Sigmoid colon (tissue), 7 donors: ENCODE measurements at regions of chr1 and their contacts with region 1.

Region 1: DNA sequence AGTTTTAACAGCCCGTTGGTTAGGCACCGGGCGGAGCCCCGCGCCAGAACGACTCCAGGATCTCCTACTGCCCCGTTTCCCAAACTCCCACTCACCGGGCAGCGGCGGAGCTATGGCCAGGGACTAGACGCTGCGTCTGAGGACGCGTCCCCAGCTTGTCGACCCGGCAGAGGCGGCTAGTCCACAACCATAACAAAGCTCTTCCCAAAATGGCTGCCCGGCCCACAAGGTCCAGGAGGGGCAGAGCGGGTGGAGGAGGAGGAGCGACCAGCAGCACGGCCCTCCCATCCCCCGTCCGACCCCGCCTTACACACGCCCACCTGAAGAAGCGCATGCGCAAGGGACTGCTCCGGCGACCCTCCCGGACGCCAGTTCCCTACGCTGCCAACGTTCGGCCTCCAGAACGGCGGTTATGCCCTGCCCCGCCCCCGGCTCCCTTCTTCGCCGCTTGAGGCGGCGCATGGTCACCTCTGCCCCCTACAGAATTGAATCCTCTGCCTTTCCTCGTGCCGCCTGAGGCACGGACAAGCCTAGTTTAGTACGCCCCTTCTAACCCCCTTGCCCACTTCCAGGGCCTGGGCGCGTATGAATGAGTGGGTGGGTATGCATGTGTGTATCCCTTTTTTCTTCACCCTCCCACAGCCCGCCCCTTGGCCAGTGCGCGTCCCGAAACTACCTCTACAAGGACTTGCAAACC is at the start of gene GPBP1L1:
- DNase-seq: peak; percentile 99
- H3K4me3 ChIP-seq: peak within 1 kb of the TSS; percentile 63 to 96 (median 81)
- H3K27ac ChIP-seq: peak within 1 kb of the TSS; percentile 97 to 99 (median 98)
- H3K4me1 ChIP-seq: peaks cover 0 to 61% (median 49%) of the 10 kb centered on the region in 4 donors
- H3K27me3 ChIP-seq: no peaks in the 10 kb centered on the region
- CTCF ChIP-seq: no peak
- EP300 ChIP-seq: peak in 1 of 4 donors; percentile 2
- POLR2A ChIP-seq: peak; percentile 69 to 80
- total RNA-seq, gene GPBP1L1: 94.5 to 142 (median 130) TPM

Region 2: DNA sequence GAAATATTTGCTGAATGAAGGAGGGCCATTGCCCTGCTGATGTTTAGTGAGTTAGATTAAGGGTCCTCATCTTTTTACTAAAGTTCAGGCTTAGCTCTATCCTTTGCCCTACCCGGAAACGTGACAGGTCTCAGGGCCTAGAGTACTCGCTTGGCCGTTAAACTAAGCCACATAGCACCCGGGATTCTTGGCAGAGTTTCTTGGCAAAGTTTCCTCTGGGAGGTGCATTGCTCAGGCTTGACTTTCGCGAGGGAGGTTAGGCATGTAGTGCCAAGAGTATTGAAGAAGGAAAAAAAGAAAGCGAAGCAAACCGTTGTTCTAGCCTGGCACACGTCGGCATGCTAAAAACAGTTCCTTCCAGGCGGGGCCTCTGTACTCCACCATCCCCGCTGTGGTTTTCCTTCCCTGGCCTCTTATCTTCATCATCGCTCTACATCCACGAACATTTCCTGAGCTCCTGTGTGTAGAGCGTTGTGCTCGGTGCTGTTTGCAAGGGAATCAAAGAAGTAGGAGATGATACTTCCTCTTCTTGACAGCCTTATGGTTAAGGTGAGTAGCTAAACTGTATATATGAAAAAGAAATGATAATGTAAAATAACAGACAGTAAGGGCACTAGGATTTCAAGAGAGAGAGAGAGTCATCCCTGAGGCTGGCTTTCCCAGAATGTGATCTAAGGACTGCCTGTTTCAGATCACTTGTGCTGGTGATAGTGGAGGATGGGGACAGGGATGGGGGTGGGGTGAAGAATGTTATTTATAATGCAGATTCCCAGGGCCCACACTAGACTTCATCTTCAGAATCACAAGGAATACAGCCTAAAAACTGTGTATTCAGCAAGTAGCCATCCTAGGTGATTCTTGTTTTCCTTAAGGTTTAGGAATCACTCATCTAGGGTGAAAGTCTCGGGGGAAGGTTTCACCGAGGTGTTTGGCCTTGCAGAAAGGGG is 1262.6 kb before region 1 on chr1:
- intact Hi-C with region 1: no loop called
- DNase-seq: peak; percentile 78
- H3K4me3 ChIP-seq: peak overlapping the region in 1 of 4 donors; percentile 21
- H3K27ac ChIP-seq: peak overlapping the region in 3 of 4 donors; percentile 38 to 60 (median 54)
- H3K4me1 ChIP-seq: peaks cover 0 to 16% (median 11%) of the 10 kb centered on the region in 4 donors
- H3K27me3 ChIP-seq: peaks cover 0 to 67% (median 26%) of the 10 kb centered on the region in 3 donors
- CTCF ChIP-seq: no peak
- EP300 ChIP-seq: no peak
- POLR2A ChIP-seq: no peak

Region 3: GRCh38 chr1:45359882-45360513 is 326.5 kb before region 1 on chr1:
- intact Hi-C with region 1: loop called (anchors 5 kb)
- DNase-seq: peak; percentile 81
- H3K4me3 ChIP-seq: no peak overlapping the region
- H3K27ac ChIP-seq: peak overlapping the region; percentile 67 to 76 (median 72)
- H3K4me1 ChIP-seq: peaks cover 0 to 24% (median 14%) of the 10 kb centered on the region in 4 donors
- H3K27me3 ChIP-seq: no peaks in the 10 kb centered on the region
- CTCF ChIP-seq: peak; percentile 30 to 71 (median 54)
- EP300 ChIP-seq: no peak
- POLR2A ChIP-seq: no peak

Region 4: DNA sequence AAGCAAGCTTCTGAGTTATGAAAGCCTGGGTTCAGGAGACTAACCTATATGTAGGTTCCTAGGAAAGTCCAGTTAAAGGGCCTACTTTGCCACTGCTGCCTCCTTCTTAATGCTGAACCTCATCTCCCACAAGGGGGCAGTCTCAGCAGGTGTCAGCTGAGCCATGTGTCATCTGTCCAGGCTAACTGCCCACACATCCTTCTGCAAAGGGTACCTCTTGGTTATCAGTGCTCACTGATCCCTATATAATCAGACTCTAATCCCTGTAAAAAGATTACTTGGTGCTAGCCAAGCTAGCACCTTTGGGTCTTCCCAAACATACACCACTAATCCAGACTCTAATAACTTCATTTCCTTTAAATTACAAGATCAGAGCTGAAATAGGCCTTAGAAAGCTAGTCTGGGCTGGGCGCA is 173.8 kb before region 1 on chr1:
- intact Hi-C with region 1: loop called (anchors 10 kb)
- DNase-seq: peak; percentile 67
- H3K4me3 ChIP-seq: no peak overlapping the region
- H3K27ac ChIP-seq: no peak overlapping the region
- H3K4me1 ChIP-seq: peaks cover 0 to 24% (median 16%) of the 10 kb centered on the region in 4 donors
- H3K27me3 ChIP-seq: no peaks in the 10 kb centered on the region
- CTCF ChIP-seq: peak; percentile 6 to 66 (median 52)
- EP300 ChIP-seq: no peak
- POLR2A ChIP-seq: no peak

Region 5: GRCh38 chr1:45583264-45583665 is 103.2 kb before region 1 on chr1:
- intact Hi-C with region 1: loop called (anchors 2 kb)
- DNase-seq: peak; percentile 99
- H3K4me3 ChIP-seq: peak overlapping the region; percentile 79 to 98 (median 82)
- H3K27ac ChIP-seq: peak overlapping the region; percentile 92 to 98 (median 94)
- H3K4me1 ChIP-seq: peaks cover 0 to 31% (median 23%) of the 10 kb centered on the region in 4 donors
- H3K27me3 ChIP-seq: no peaks in the 10 kb centered on the region
- CTCF ChIP-seq: no peak
- EP300 ChIP-seq: no peak
- POLR2A ChIP-seq: no peak

Region 6: GRCh38 chr1:45750298-45751038 is 64.0 kb after region 1 on chr1 and contains the start of gene IPP:
- intact Hi-C with region 1: loop called (anchors 5 kb)
- DNase-seq: peak; percentile 98
- H3K4me3 ChIP-seq: peak within 1 kb of the TSS; percentile 61 to 71 (median 64)
- H3K27ac ChIP-seq: peak within 1 kb of the TSS; percentile 94 to 97 (median 95)
- H3K4me1 ChIP-seq: peaks cover 0 to 13% (median 10%) of the 10 kb centered on the region in 4 donors
- H3K27me3 ChIP-seq: no peaks in the 10 kb centered on the region
- CTCF ChIP-seq: no peak
- EP300 ChIP-seq: no peak
- POLR2A ChIP-seq: peak; percentile 94 to 96
- total RNA-seq, gene IPP: 11.2 to 15.3 (median 11.6) TPM

Region 7: DNA sequence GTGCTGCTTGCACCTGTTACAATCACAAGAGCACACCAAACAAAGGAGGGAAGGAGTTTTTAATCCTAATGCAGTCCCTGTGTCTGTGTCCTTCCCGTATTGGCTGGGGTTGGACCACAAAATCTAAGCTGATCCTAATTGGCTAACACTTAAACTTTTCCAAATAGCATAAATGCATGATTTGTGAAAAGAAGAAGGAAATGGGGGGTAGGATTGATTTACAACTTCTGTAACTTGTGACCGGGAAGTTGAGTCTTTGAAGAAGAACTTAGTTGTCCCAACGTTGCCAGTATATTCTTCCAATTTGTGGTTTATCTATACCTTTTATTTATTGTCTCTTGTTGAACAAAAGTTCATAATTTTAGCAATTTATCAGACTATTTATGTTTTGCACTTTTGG is 75.8 kb after region 1 on chr1:
- intact Hi-C with region 1: no loop called
- DNase-seq: no peak
- H3K4me3 ChIP-seq: no peak overlapping the region
- H3K27ac ChIP-seq: no peak overlapping the region
- H3K4me1 ChIP-seq: no peaks in the 10 kb centered on the region
- H3K27me3 ChIP-seq: no peaks in the 10 kb centered on the region
- CTCF ChIP-seq: no peak
- EP300 ChIP-seq: no peak
- POLR2A ChIP-seq: no peak

Region 8: DNA sequence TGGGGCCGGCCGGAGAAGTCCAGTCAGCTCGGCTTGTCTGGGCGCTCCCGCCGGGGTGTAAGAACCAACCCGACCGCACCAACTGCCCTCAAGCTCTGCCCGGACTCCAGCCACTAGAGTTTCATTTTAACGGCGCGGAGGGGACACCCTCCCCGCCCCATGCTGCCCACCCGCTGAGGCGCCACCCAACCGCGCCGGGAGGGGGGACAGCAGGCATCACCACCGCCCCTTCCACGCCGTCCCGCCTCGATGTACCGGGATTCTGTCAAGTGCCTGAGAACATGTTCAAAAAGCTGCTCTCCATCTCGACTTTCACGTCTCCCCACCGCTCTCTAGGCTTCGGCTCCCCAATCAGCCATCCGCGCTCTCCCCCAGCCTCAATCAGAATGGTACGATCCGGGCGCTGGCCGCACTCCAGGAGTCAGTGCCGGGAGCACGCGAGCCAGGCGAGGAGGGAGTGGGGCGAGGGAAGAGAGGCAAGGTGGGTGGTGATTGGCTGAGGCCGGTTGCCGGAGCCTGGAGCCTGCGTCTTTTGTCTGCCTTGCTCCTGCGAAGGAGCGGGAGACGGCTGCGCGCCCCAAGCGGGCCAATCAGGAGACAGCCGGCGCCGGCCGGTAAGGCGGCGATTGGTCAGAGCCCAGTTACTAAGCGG is 446.2 kb after region 1 on chr1 and contains the start of gene PIK3R3:
- intact Hi-C with region 1: loop called (anchors 2 kb)
- DNase-seq: peak; percentile 99
- H3K4me3 ChIP-seq: peak within 1 kb of the TSS; percentile 37 to 72 (median 68)
- H3K27ac ChIP-seq: peak within 1 kb of the TSS; percentile 91 to 94 (median 92)
- H3K4me1 ChIP-seq: peaks cover 0 to 32% (median 15%) of the 10 kb centered on the region in 4 donors
- H3K27me3 ChIP-seq: peaks cover 0 to 11% (median 0%) of the 10 kb centered on the region in 3 donors
- CTCF ChIP-seq: no peak
- EP300 ChIP-seq: no peak
- POLR2A ChIP-seq: peak; percentile 90 to 94
- total RNA-seq, gene PIK3R3: 6.2 to 11.6 (median 9.4) TPM